ENCODE measurements at regions of chr15 and their contacts with region 1.

Region 1: DNA sequence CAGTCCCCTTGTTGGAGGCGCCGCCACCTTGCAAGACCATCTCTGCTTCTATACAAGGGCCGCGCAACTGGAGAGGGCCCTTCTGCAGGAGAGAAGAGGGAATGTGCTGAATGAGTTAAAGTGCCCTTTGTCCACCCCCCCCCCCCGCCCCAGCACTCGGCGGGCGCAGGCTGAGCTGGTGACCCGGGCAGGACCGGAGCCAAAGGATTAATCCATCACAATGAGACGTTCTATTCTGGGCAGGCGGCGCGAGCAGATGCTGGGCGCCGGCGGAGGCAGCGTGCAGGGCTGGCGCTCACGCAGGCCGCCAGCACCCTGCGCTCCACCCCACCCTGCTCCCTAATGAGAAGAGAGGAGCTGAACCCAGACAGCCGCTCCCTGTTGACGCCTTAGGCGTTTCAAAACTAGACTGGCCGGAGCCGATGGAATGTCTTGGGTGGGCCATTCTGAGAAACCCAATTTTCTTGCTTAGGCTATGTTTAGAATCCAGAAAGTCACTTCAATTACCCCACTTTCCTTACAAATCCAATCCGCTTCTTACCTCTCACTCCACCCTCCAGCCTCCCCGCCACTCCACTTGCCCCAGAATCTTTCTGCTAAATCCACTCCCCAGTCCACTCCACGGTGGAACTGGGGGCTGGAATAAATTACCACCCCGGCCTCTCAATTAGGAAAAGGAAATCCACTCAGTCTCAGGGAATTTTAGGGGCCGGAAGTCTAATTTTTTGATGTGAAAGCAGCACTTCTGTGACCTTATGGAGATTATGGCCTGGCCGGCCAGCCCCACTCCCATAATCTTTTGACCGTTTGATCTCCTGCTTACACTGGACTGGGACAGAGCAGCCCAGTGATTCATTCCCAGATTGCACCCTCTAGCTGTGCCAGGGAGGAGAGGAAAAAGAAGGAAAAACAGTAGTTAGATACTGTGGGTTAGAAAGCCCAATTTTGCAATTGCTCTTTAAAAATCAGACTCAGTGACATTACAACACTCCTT is 32.7 kb downstream of the GJD2 start:
- DNase-seq: peak; percentile 65 to 88 (median 75)
- ATAC-seq: peak; percentile 87 to 96 (median 94)
- H3K4me3 ChIP-seq: peak overlapping the region in 9 of 12 donors; percentile 0 to 35 (median 17)
- H3K27ac ChIP-seq: peak overlapping the region; percentile 34 to 90 (median 80)
- H3K4me1 ChIP-seq: peaks cover 0 to 67% (median 23%) of the 10 kb centered on the region in 12 donors
- H3K27me3 ChIP-seq: peaks cover 0 to 18% (median 0%) of the 10 kb centered on the region in 9 donors
- CTCF ChIP-seq: peak in 2 of 12 donors; percentile 14 to 20
- POLR2A ChIP-seq: peak in 1 of 2 donors; percentile 37

Region 2: DNA sequence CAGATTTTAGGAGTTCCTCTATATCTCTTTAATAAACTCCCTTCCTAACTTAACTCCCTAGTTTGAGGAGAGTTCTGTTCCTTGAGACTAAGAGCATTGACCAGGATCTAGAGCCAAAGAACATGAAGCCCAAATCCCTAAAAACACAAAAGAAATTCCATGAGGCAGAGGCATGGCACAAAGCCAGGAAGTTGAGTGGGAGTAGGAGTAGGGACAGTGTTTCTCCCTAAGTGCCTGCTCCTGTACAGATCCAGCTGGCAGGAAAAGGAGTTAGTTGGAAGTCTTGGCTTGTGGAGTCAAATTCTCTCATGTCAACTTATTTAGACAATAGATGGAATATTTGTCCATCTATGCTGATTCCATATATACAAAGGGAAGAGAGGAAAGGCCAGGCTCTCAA is 61.9 kb after region 1 on chr15:
- intact Hi-C with region 1: loop called in 2 of 10 experiments (anchors 5 to 10 kb)
- DNase-seq: no peak
- ATAC-seq: no peak
- H3K4me3 ChIP-seq: no peak overlapping the region
- H3K27ac ChIP-seq: no peak overlapping the region
- H3K4me1 ChIP-seq: no peaks in the 10 kb centered on the region
- H3K27me3 ChIP-seq: no peaks in the 10 kb centered on the region
- CTCF ChIP-seq: no peak
- POLR2A ChIP-seq: no peak

Region 3: DNA sequence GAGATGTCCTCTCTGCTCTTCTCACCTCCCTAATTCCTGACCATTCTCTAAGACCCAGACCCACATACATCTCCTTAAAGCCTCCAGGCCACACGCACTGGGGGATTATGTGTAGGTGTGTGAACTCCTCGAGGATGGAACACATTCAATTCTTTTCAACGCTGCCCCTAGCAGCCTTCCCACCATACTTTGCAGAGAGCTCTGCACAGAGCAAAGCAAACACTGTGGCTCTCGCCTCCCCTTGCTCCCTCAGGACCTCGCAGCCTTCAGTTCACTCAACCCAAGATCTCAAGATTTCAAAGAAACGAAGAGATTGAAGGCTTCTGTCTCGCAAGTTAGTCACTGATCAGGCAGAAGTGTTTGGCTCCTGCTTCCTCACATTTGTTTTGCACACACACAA is 67.2 kb after region 1 on chr15:
- intact Hi-C with region 1: loop called in 6 of 10 experiments (anchors 2 to 10 kb)
- DNase-seq: peak in 1 of 5 donors; percentile 45
- ATAC-seq: peak; percentile 9 to 36 (median 33)
- H3K4me3 ChIP-seq: no peak overlapping the region
- H3K27ac ChIP-seq: peak overlapping the region in 5 of 12 donors; percentile 6 to 90 (median 21)
- H3K4me1 ChIP-seq: no peaks in the 10 kb centered on the region
- H3K27me3 ChIP-seq: peaks cover 0 to 16% (median 0%) of the 10 kb centered on the region in 9 donors
- CTCF ChIP-seq: no peak
- POLR2A ChIP-seq: no peak

Region 4: DNA sequence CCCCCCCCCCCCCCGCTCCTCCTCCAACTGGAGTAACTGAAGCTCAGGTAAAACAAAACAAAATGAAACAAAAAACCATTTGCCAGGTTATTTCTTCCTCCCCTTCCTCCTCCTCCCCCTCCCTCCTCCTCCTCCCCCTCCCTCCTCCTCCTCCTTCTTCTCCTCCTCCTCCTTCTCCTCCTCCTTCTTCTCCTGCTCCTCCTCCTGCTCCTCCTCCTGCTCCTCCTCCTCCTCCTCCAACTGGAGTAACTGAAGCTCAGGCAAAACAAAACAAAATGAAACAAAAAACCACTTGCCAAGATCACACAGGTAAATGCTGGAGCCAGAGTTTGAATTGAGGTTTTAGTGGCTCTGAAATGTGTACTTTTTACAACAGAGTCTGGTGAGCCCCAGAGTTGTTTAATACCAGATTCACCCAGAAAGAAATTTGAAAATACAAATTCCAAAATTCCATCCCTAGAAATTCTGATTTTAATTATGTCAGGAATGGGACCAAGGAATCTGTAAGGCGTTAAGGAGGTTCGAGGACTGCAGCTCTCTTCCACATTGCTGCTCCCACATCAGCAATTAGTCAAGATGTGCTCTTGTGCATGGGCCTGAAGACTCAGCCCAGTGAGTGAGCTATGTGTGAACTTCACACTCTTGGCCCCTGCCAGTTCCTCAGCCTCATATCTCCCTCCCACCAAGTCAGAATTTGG is 297.4 kb after region 1 on chr15:
- intact Hi-C with region 1: no loop called
- DNase-seq: no peak
- ATAC-seq: no peak
- H3K4me3 ChIP-seq: no peak overlapping the region
- H3K27ac ChIP-seq: no peak overlapping the region
- H3K4me1 ChIP-seq: no peaks in the 10 kb centered on the region
- H3K27me3 ChIP-seq: no peaks in the 10 kb centered on the region
- CTCF ChIP-seq: no peak
- POLR2A ChIP-seq: no peak